CD4-positive, alpha-beta T cell (primary cell): ENCODE measurements at regions of chr20 and their contacts with region 1.

Region 1: GRCh38 chr20:46089417-46090388 is at the start of gene NCOA5:
- DNase-seq: peak; percentile 86 to 97 (median 92)
- ATAC-seq: peak; percentile 90
- H3K4me3 ChIP-seq: peak within 1 kb of the TSS; percentile 95
- H3K4me3 Mint-ChIP-seq: peak within 1 kb of the TSS; percentile 94
- H3K27ac ChIP-seq: peak within 1 kb of the TSS; percentile 67 to 85
- H3K27ac Mint-ChIP-seq: peak within 1 kb of the TSS; percentile 86
- H3K4me1 ChIP-seq: peaks cover 22% of the 10 kb centered on the region
- H3K4me1 Mint-ChIP-seq: peaks cover 54% of the 10 kb centered on the region
- H3K27me3 ChIP-seq: peaks cover 0 to 3% of the 10 kb centered on the region in 2 experiments
- H3K27me3 Mint-ChIP-seq: no peaks in the 10 kb centered on the region
- CTCF ChIP-seq: no peak
- total RNA-seq, gene NCOA5: 9.7 to 10.5 TPM

Region 2: DNA sequence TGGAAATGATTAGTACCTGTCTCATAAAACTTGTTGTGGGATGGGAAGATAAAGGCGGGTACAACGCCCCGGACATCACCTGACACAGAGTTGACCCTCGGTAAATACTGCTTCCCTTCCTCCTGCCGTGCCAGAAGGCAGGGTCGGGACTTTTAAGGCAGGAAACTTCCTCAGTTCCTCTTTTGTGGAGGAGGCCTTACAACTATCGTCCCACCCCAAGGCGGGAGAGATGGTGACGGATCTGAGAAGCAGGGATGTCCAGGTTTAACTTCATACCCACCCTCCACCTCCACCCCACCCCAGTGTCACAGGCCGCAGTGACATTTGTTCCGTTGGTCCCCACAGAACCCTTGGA is 297.4 kb before region 1 on chr20:
- CTCF ChIA-PET with region 1: no interaction called
- POLR2A ChIA-PET with region 1: no interaction called
- intact Hi-C with region 1: loop called in 1 of 2 experiments (anchors 5 kb)
- DNase-seq: peak in 4 of 14 experiments; percentile 1 to 56 (median 4)
- ATAC-seq: peak; percentile 3
- H3K4me3 ChIP-seq: peak overlapping the region; percentile 90
- H3K4me3 Mint-ChIP-seq: peak overlapping the region; percentile 98
- H3K27ac ChIP-seq: peak overlapping the region; percentile 80 to 81
- H3K27ac Mint-ChIP-seq: peak overlapping the region; percentile 91
- H3K4me1 ChIP-seq: peaks cover 20% of the 10 kb centered on the region
- H3K4me1 Mint-ChIP-seq: peaks cover 25% of the 10 kb centered on the region
- H3K27me3 ChIP-seq: no peaks in the 10 kb centered on the region
- H3K27me3 Mint-ChIP-seq: no peaks in the 10 kb centered on the region
- CTCF ChIP-seq: no peak

Region 3: DNA sequence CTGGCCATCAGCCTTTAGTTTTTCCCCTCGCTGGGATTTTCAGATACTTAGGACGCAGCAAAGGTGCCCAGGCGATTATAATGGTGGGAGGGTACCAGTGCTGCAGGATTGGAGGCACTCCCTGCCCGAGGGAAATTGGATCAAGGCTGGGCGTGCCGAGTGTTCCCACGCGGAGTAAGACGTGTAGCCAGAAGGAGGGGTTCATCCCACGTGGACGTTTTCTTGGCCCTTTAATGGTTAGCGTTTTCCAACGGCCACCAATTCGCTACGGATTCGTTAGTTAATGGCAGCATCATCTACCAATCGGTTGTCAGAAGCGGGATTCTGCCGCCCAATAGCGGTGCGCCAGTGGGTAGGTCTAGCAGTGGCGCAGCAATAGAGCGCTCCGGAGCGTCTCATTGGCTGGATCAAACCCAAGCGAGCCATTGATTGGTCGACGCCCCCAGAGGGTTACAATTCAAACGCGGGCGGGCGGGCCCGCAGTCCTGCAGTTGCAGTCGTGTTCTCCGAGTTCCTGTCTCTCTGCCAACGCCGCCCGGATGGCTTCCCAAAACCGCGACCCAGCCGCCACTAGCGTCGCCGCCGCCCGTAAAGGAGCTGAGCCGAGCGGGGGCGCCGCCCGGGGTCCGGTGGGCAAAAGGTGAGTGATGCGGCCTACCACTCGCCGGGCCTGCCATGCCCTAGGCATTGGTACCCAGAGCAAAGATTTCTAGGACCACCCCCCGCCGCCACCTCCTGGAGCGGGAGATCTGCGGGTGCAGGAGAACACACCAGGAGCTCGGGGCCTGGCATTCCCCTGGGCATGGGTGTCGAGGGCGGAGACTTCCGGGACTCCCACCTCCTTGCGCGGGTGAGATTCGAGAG is 277.3 kb before region 1 on chr20 and contains the start of gene UBE2C:
- CTCF ChIA-PET with region 1: no interaction called
- POLR2A ChIA-PET with region 1: no interaction called
- intact Hi-C with region 1: loop called in 1 of 2 experiments (anchors 1 kb)
- DNase-seq: peak; percentile 85 to 98 (median 90)
- ATAC-seq: peak; percentile 100
- H3K4me3 ChIP-seq: peak within 1 kb of the TSS; percentile 72
- H3K4me3 Mint-ChIP-seq: peak within 1 kb of the TSS; percentile 82
- H3K27ac ChIP-seq: no peak within 1 kb of the TSS
- H3K27ac Mint-ChIP-seq: peak within 1 kb of the TSS; percentile 58
- H3K4me1 ChIP-seq: peaks cover 16% of the 10 kb centered on the region
- H3K4me1 Mint-ChIP-seq: peaks cover 15% of the 10 kb centered on the region
- H3K27me3 ChIP-seq: no peaks in the 10 kb centered on the region
- H3K27me3 Mint-ChIP-seq: no peaks in the 10 kb centered on the region
- CTCF ChIP-seq: no peak
- total RNA-seq, gene UBE2C: 0.52 to 0.64 TPM

Region 4: DNA sequence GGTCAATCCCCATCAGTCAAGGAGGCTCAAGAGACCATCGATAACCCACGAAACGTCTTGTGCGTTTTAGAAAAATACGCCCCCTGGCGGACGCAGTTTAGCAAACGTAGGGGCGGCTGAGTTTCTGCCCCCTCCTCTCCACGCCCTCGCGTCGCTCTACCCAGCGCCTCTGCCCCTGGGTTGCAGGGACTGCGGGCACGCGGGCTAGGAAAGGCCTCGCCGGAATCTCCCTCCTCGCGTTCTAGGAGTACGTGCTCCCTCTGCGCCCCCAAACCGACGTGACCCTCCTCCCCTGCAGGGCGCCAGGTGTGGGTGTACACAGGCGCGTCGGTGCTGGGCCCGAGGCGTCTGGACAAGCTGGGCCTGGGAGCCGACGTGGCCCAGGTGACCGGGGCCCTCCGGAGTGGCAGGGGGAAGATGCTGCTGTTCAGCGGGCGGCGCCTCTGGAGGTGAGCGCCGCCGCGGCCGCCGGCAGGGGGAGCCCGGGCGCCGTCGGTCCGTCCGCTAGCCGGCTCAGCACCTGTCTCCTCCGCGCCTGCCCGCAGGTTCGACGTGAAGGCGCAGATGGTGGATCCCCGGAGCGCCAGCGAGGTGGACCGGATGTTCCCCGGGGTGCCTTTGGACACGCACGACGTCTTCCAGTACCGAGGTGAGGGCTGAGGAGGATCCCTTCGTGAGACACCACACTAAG is 75.7 kb before region 1 on chr20:
- CTCF ChIA-PET with region 1: interaction called, 3 read pairs
- POLR2A ChIA-PET with region 1: no interaction called
- intact Hi-C with region 1: loop called in 1 of 2 experiments (anchors 2 kb)
- DNase-seq: peak; percentile 46 to 88 (median 60)
- ATAC-seq: peak; percentile 57
- H3K4me3 ChIP-seq: peak overlapping the region; percentile 43
- H3K4me3 Mint-ChIP-seq: peak overlapping the region; percentile 35
- H3K27ac ChIP-seq: no peak overlapping the region
- H3K27ac Mint-ChIP-seq: no peak overlapping the region
- H3K4me1 ChIP-seq: peaks cover 55% of the 10 kb centered on the region
- H3K4me1 Mint-ChIP-seq: peaks cover 62% of the 10 kb centered on the region
- H3K27me3 ChIP-seq: peaks cover 41 to 48% of the 10 kb centered on the region in 2 experiments
- H3K27me3 Mint-ChIP-seq: peaks cover 86% of the 10 kb centered on the region
- CTCF ChIP-seq: peak; percentile 96

Region 5: DNA sequence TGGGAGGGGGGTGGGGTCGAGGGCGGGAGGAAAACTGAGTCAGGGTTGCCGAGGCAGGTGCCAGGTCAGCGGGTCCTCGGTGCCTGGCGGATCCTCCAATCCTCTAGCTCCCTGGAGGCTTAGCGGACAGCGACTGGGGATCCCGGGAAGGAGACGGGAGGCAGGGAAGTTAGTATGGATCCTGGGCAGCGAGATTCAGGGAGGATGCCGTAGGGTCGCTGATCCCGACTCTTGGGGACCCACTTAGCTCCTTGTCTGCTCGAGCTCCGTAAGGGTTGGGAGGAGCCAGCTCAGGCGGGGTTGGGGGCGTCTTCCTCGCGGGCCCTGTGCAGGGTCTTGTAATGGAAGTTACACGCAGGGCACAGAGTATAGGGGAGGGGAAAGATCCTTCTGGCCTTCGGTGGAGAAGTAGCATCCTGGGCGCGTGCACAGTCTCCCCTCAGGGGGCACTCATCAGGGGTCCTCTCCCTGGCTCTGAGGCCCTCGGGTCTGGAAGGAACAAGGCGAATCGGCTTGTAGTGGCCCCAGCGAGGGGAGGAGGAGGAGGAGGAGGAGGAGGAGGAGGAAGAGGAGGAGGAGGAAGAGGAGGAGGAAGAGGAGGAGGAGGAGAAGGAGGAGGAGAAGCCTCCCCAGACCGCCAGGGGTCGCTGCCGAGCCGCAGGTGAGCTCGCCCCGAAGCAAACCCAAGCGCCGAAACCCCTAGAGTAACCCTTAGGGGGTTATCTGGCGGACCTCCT is 67.1 kb before region 1 on chr20:
- CTCF ChIA-PET with region 1: interaction called, 6 read pairs
- POLR2A ChIA-PET with region 1: no interaction called
- intact Hi-C with region 1: loop called in 1 of 2 experiments (anchors 2 kb)
- DNase-seq: peak; percentile 59 to 85 (median 69)
- ATAC-seq: peak; percentile 59
- H3K4me3 ChIP-seq: peak overlapping the region; percentile 25
- H3K4me3 Mint-ChIP-seq: peak overlapping the region; percentile 69
- H3K27ac ChIP-seq: no peak overlapping the region
- H3K27ac Mint-ChIP-seq: no peak overlapping the region
- H3K4me1 ChIP-seq: peaks cover 25% of the 10 kb centered on the region
- H3K4me1 Mint-ChIP-seq: peaks cover 23% of the 10 kb centered on the region
- H3K27me3 ChIP-seq: peaks cover 25 to 56% of the 10 kb centered on the region in 2 experiments
- H3K27me3 Mint-ChIP-seq: peaks cover 74% of the 10 kb centered on the region
- CTCF ChIP-seq: peak; percentile 75

Region 6: GRCh38 chr20:46107061-46107460 is 17.4 kb after region 1 on chr20:
- CTCF ChIA-PET with region 1: no interaction called
- POLR2A ChIA-PET with region 1: no interaction called
- intact Hi-C with region 1: no loop called
- DNase-seq: no peak
- ATAC-seq: no peak
- H3K4me3 ChIP-seq: no peak overlapping the region
- H3K4me3 Mint-ChIP-seq: no peak overlapping the region
- H3K27ac ChIP-seq: no peak overlapping the region
- H3K27ac Mint-ChIP-seq: no peak overlapping the region
- H3K4me1 ChIP-seq: no peaks in the 10 kb centered on the region
- H3K4me1 Mint-ChIP-seq: no peaks in the 10 kb centered on the region
- H3K27me3 ChIP-seq: peaks cover 26 to 35% of the 10 kb centered on the region in 2 experiments
- H3K27me3 Mint-ChIP-seq: peaks cover 85% of the 10 kb centered on the region
- CTCF ChIP-seq: no peak